ENCODE measurements at regions of chr2 and their contacts with region 1.

Region 1: GRCh38 chr2:7427293-7428060 is 510.3 kb downstream of the RNF144A start:
- DNase-seq: peak in 1 of 5 donors; percentile 40
- H3K4me3 ChIP-seq: no peak overlapping the region
- H3K27ac ChIP-seq: no peak overlapping the region
- H3K4me1 ChIP-seq: no peaks in the 10 kb centered on the region
- H3K27me3 ChIP-seq: no peaks in the 10 kb centered on the region
- CTCF ChIP-seq: peak; percentile 48 to 84 (median 61)
- EP300 ChIP-seq: no peak
- POLR2A ChIP-seq: no peak

Region 2: DNA sequence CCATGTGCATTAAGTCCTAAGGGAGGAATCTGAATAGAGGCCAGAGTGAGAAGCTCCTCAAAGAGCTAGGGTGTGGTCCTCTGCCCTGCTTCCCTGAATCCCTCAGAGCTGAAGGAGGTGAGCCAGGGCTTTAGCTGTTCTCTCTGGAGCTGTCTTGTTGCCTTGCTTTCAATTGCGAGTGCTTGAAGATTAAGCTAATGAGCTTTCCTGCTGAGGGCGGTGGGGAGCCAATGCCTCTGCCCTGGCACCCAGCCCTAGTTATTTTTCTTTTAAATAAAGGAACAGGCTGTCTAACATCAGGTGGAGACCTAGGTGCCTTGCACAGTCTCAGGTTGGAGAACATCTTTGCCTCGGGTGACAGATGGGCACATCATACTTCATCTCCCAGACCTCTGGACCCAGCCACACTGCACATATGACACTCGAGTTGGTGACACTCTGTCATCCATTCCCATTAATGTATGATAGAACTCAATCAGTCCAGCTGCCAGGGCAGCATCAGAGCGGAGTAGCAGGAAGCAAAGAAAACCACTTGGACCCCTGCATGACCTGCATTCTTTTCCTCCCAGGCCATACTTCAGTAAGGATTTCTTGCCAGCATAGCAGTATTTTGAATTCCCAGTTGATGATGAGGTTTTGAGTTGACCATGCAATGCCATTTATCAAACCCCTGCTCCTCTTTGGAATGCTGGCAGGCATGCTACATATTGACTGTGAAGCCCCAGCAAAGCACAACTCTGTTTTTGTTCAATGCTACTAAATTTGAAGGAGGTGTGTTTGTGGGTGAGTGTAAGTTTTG is 217.5 kb before region 1 on chr2:
- intact Hi-C with region 1: no loop called
- DNase-seq: no peak
- H3K4me3 ChIP-seq: no peak overlapping the region
- H3K27ac ChIP-seq: no peak overlapping the region
- H3K4me1 ChIP-seq: peaks cover 2% of the 10 kb centered on the region
- H3K27me3 ChIP-seq: no peaks in the 10 kb centered on the region
- CTCF ChIP-seq: no peak
- EP300 ChIP-seq: no peak
- POLR2A ChIP-seq: no peak

Region 3: GRCh38 chr2:7962161-7962560 is 534.7 kb after region 1 on chr2:
- intact Hi-C with region 1: no loop called
- DNase-seq: no peak
- H3K4me3 ChIP-seq: no peak overlapping the region
- H3K27ac ChIP-seq: no peak overlapping the region
- H3K4me1 ChIP-seq: no peaks in the 10 kb centered on the region
- H3K27me3 ChIP-seq: no peaks in the 10 kb centered on the region
- CTCF ChIP-seq: no peak
- EP300 ChIP-seq: no peak
- POLR2A ChIP-seq: no peak

Region 4: GRCh38 chr2:8693155-8693821 is 1265.8 kb after region 1 on chr2:
- intact Hi-C with region 1: loop called in 3 of 4 experiments (anchors 5 to 10 kb)
- DNase-seq: peak in 3 of 5 donors; percentile 47 to 59 (median 55)
- H3K4me3 ChIP-seq: no peak overlapping the region
- H3K27ac ChIP-seq: no peak overlapping the region
- H3K4me1 ChIP-seq: peaks cover 3% of the 10 kb centered on the region
- H3K27me3 ChIP-seq: no peaks in the 10 kb centered on the region
- CTCF ChIP-seq: peak in 2 of 3 donors; percentile 15 to 20
- EP300 ChIP-seq: no peak
- POLR2A ChIP-seq: no peak

Region 5: DNA sequence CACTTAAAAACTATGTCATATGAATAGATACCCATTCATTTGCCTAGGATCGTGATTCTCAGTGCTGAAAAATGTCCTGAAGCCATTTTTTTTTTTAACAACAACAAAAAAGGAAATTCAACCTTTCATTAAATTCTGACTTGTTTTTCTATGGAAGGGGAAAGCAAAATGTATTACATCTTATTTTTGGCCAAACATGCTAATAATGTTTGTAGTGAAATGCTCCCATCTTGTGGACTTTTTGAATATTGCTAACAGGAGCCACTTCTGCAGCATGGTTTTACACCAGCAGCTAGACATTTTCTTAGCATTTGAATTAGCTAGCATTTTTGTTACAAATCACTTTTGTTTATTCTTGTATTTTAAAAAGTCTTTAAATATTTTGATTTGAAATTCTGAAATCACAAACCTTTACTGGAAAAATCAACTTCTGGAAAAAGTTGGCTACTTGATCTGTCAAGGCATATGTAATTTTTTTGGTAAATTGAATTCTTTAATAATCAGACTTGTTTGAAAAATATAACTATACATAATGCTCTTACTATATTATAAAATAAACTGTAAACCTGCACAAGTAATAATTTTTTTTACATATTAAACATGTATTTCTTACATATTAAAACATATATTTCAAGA is 1334.2 kb after region 1 on chr2:
- intact Hi-C with region 1: loop called in 1 of 4 experiments (anchors 10 kb)
- DNase-seq: no peak
- H3K4me3 ChIP-seq: no peak overlapping the region
- H3K27ac ChIP-seq: no peak overlapping the region
- H3K4me1 ChIP-seq: no peaks in the 10 kb centered on the region
- H3K27me3 ChIP-seq: no peaks in the 10 kb centered on the region
- CTCF ChIP-seq: peak in 1 of 3 donors; percentile 22
- EP300 ChIP-seq: no peak
- POLR2A ChIP-seq: no peak

Measured in ovary (tissue), 10 donors.